ENCODE measurements at regions of chr14 and their contacts with region 1.

Region 1: GRCh38 chr14:22478670-22479069 is 110.4 kb downstream of the DAD1 start:
- H3K4me3 Mint-ChIP-seq: no peak overlapping the region
- H3K27ac Mint-ChIP-seq: no peak overlapping the region
- H3K4me1 Mint-ChIP-seq: no peaks in the 10 kb centered on the region
- H3K27me3 Mint-ChIP-seq: peaks cover 1% of the 10 kb centered on the region

Region 2: GRCh38 chr14:22319526-22320361 is 158.9 kb before region 1 on chr14:
- intact Hi-C with region 1: loop called (anchors 5 kb)
- H3K4me3 Mint-ChIP-seq: no peak overlapping the region
- H3K27ac Mint-ChIP-seq: no peak overlapping the region
- H3K4me1 Mint-ChIP-seq: no peaks in the 10 kb centered on the region
- H3K27me3 Mint-ChIP-seq: peaks cover 5% of the 10 kb centered on the region

Region 3: DNA sequence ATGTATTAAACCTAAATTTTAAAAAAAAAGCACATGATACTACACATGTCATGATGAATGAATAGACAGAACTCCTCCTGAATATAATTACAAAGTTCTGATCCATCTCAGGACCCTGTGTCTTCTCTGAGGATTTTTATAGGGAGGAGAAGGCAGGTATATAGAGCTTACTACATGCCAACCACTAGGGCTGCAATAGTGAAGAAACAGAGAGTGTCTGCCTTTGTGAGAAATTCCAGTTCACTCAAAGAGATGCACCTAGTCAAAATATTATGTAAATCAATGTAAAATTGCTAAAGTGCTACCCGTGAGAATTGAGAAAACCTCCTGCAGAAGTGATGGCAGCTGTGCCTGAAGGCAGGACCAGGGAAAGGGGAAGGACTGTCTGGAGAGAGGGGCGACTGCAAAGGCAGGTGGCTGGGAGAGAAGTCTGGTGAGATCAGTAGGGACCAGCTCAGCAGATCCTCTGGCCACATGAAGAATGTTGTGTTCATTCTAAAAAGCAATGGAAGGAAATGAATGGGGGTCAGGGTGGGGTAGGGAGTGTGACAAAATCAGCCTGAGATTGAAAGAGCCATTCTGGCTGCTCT is 134.5 kb after region 1 on chr14:
- intact Hi-C with region 1: no loop called
- H3K4me3 Mint-ChIP-seq: no peak overlapping the region
- H3K27ac Mint-ChIP-seq: peak overlapping the region; percentile 13
- H3K4me1 Mint-ChIP-seq: no peaks in the 10 kb centered on the region
- H3K27me3 Mint-ChIP-seq: peaks cover 2% of the 10 kb centered on the region